Transverse colon (tissue), 4 donors: ENCODE measurements at regions of chr6 and their contacts with region 1.

Region 1: GRCh38 chr6:17454316-17455005 is 61.1 kb downstream of the CAP2 start:
- DNase-seq: no peak
- H3K4me3 ChIP-seq: no peak overlapping the region
- H3K27ac ChIP-seq: no peak overlapping the region
- H3K4me1 ChIP-seq: no peaks in the 10 kb centered on the region
- H3K27me3 ChIP-seq: no peaks in the 10 kb centered on the region
- CTCF ChIP-seq: no peak
- EP300 ChIP-seq: no peak
- POLR2A ChIP-seq: no peak

Region 2: DNA sequence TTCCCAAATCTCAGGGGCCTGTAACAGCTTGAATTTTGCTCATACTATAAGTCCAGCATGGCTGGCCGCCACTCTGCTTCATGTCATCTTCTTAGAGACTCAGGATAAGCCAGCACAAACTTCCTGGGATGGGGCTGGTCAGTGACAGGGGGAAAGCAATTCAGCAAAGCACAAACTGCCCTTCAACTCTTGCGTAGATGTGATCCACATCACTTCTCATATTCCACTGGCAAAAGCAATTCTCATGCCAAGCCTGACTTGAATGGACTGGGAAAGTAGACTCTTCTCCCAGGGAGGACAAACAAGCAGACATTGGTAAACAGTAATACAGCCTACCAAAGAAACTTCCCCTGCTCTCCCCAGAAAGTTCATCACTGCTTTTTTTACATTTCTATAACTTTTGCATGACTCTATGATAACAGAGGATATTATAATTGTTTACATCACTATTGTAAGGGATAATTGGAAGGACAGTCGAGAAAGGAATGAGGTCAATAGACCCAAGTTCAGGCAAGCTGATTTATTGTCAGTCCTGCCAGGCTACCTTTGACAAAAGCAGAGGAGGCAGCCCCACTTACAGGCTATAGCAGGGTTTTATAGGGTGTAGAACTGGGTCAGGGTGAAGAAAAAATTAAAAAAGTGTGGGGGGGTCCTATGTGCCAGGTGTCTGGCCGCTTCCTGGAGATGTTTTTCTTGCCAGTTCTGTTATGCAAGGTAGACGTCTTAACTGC is 135.9 kb before region 1 on chr6:
- in situ Hi-C with region 1: no loop called
- intact Hi-C with region 1: no loop called
- DNase-seq: no peak
- H3K4me3 ChIP-seq: no peak overlapping the region
- H3K27ac ChIP-seq: no peak overlapping the region
- H3K4me1 ChIP-seq: no peaks in the 10 kb centered on the region
- H3K27me3 ChIP-seq: no peaks in the 10 kb centered on the region
- CTCF ChIP-seq: no peak
- EP300 ChIP-seq: no peak
- POLR2A ChIP-seq: no peak

Region 3: GRCh38 chr6:17413313-17413750 is 41.1 kb before region 1 on chr6:
- in situ Hi-C with region 1: no loop called
- intact Hi-C with region 1: loop called (anchors 1 kb)
- DNase-seq: no peak
- H3K4me3 ChIP-seq: no peak overlapping the region
- H3K27ac ChIP-seq: no peak overlapping the region
- H3K4me1 ChIP-seq: peaks cover 0 to 10% (median 0%) of the 10 kb centered on the region in 4 donors
- H3K27me3 ChIP-seq: no peaks in the 10 kb centered on the region
- CTCF ChIP-seq: no peak
- EP300 ChIP-seq: no peak
- POLR2A ChIP-seq: no peak

Region 4: GRCh38 chr6:17640477-17640917 is 186.0 kb after region 1 on chr6:
- in situ Hi-C with region 1: no loop called
- intact Hi-C with region 1: no loop called
- DNase-seq: no peak
- H3K4me3 ChIP-seq: no peak overlapping the region
- H3K27ac ChIP-seq: no peak overlapping the region
- H3K4me1 ChIP-seq: no peaks in the 10 kb centered on the region
- H3K27me3 ChIP-seq: no peaks in the 10 kb centered on the region
- CTCF ChIP-seq: no peak
- EP300 ChIP-seq: no peak
- POLR2A ChIP-seq: no peak